Posterior cingulate gyrus (tissue), 11 donors: ENCODE measurements at regions of chr6 and their contacts with region 1.

Region 1: GRCh38 chr6:27388293-27389197 is at the start of gene ZNF391:
- DNase-seq: peak; percentile 73 to 97 (median 82)

Region 2: GRCh38 chr6:27374824-27375612 is 13.5 kb before region 1 on chr6:
- intact Hi-C with region 1: loop called (anchors 2 kb)
- DNase-seq: peak; percentile 63 to 97 (median 80)

Region 3: GRCh38 chr6:27472617-27473400 is 84.3 kb after region 1 on chr6 and contains the start of gene ZNF184:
- intact Hi-C with region 1: loop called (anchors 2 kb)
- DNase-seq: peak; percentile 90 to 99 (median 93)